Activated CD4-positive, alpha-beta memory T cell treated with anti-CD3 and anti-CD28 coated beads for 36 hours (primary cell): ENCODE measurements at regions of chr1 and their contacts with region 1.

Region 1: DNA sequence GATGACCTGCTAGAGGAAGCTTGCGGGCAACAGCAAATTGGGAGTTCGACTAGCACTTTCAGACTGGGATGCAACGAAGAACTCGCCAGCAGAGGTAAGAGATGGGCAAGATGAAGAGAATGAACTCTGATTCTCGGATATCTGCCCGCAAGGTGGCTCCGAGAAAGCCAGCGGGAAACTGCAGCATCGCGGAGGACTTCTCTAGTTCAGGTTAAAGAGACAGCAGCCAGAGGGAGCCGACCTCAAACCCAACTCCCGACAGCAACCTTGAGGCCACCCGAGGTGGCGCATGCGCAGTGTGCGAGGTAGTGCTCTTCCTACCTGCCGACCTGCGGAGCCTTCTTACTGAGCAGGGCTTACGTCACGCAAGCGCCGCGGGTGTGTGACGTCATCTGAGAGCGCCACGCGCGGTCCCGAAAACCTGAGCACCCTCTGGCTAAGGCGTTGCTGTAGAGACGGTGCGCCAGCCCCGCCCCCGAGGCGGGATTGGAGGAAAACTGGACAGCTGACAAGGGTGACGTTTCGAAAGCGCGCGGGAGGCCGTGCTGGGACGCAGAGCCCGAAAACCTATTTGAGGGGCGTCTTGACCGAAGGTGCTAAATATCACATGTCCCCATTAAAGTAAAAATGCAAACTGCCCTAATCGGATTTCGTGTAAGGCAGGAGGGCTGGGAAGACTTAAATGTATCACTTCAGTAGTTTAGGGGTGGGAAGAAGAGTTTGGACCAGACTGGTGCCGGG is 110.5 kb upstream of the SLC25A33 start:
- DNase-seq: peak; percentile 100
- H3K4me3 Mint-ChIP-seq: peak overlapping the region; percentile 90
- H3K27ac Mint-ChIP-seq: peak overlapping the region; percentile 93
- H3K4me1 Mint-ChIP-seq: peaks cover 44% of the 10 kb centered on the region
- H3K27me3 Mint-ChIP-seq: no peaks in the 10 kb centered on the region

Region 2: GRCh38 chr1:9275567-9276034 is 153.2 kb before region 1 on chr1:
- CTCF ChIA-PET with region 1: interaction called, 3 read pairs
- POLR2A ChIA-PET with region 1: interaction called, 4 read pairs
- intact Hi-C with region 1: loop called (anchors 5 kb)
- DNase-seq: peak; percentile 94
- H3K4me3 Mint-ChIP-seq: no peak overlapping the region
- H3K27ac Mint-ChIP-seq: no peak overlapping the region
- H3K4me1 Mint-ChIP-seq: peaks cover 35% of the 10 kb centered on the region
- H3K27me3 Mint-ChIP-seq: peaks cover 6% of the 10 kb centered on the region

Region 3: DNA sequence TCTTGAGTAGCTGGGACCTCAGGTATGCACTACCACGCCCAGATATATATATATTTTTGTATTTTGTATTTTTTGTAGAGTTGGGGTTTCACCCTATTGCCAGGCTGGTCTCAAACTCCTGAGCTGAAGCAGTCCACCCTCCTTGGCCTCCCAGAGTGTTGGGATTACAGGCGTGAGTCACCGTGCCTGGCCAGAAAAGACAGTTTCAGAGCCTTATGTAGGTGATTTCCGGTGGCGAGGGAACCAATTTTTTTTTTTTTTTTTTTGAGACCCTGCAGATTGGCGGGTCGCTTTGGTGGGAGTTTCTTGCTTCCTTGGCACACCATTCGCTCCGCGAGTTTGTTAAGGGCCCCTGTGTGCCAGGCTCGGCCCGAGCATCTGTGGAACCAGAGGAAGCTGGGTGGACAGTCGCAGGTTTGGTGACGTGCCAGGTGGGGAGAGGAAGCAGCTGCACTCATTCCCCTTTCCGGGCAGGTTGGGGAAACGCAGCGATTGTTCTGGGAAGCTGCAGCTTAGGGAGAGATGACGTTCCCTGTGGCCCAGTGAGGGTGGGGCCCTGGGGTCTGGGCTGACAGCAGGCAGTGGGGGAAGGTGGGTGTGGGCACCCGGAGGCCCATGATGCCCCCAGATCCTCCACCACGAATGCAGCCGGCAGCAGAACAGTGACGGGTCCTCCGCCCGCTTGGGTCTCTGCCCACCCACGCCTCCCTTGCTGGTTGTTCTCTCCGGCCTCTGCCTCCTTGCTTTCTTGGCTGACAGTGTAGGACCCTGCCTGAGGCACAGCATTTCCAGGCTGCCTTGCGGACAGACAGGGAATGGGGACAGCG is 111.0 kb before region 1 on chr1:
- CTCF ChIA-PET with region 1: no interaction called
- POLR2A ChIA-PET with region 1: no interaction called
- intact Hi-C with region 1: loop called (anchors 1 kb)
- DNase-seq: peak; percentile 44
- H3K4me3 Mint-ChIP-seq: no peak overlapping the region
- H3K27ac Mint-ChIP-seq: no peak overlapping the region
- H3K4me1 Mint-ChIP-seq: peaks cover 38% of the 10 kb centered on the region
- H3K27me3 Mint-ChIP-seq: no peaks in the 10 kb centered on the region

Region 4: GRCh38 chr1:9413148-9413876 is 15.5 kb before region 1 on chr1:
- CTCF ChIA-PET with region 1: interaction called, 7 read pairs
- POLR2A ChIA-PET with region 1: interaction called, 16 read pairs
- intact Hi-C with region 1: loop called (anchors 1 kb)
- DNase-seq: peak; percentile 90
- H3K4me3 Mint-ChIP-seq: no peak overlapping the region
- H3K27ac Mint-ChIP-seq: peak overlapping the region; percentile 56
- H3K4me1 Mint-ChIP-seq: peaks cover 51% of the 10 kb centered on the region
- H3K27me3 Mint-ChIP-seq: peaks cover 5% of the 10 kb centered on the region

Region 5: DNA sequence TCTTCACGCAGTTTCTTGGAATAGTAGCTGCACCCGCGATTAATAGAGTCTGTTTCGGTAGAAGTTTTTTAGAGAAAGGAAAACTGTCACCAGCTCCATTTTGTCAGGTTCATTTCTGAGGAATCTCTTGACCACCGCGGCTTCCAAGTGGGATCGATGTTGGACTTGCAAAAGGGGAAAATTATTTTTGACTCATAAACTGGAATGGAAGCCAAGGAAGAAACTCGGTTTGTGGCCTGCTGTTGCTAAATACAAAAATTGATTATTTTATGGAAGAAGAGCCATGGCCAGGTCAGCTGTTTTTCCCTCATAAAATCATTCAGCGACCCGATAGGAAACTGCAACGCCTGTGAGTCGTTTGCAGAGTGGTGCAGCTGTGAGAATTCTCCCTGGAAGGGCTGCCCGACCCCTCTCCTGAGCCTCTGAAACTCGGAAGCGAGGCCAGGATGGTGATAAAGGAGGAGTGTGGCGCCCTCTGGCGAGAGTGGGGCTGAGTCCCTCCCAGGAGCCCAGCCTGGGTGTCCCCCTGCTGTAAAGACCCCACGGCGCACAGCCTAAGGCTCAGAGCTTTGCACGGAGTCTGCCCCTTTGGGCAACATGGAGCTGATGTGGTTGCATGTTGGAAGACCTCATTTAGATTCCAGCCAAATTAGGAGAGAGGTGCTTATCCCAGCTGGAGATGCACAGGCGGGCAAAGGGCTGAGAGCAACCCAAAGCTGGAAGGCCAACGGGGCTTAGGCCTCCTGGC is 26.9 kb after region 1 on chr1:
- CTCF ChIA-PET with region 1: interaction called, 18 read pairs
- POLR2A ChIA-PET with region 1: no interaction called
- intact Hi-C with region 1: no loop called
- DNase-seq: peak; percentile 74
- H3K4me3 Mint-ChIP-seq: no peak overlapping the region
- H3K27ac Mint-ChIP-seq: no peak overlapping the region
- H3K4me1 Mint-ChIP-seq: no peaks in the 10 kb centered on the region
- H3K27me3 Mint-ChIP-seq: no peaks in the 10 kb centered on the region

Region 6: GRCh38 chr1:9539165-9539828 is 110.5 kb after region 1 on chr1 and contains the start of gene SLC25A33:
- CTCF ChIA-PET with region 1: no interaction called
- POLR2A ChIA-PET with region 1: no interaction called
- intact Hi-C with region 1: loop called (anchors 2 kb)
- DNase-seq: peak; percentile 99
- H3K4me3 Mint-ChIP-seq: peak within 1 kb of the TSS; percentile 91
- H3K27ac Mint-ChIP-seq: peak within 1 kb of the TSS; percentile 77
- H3K4me1 Mint-ChIP-seq: peaks cover 33% of the 10 kb centered on the region
- H3K27me3 Mint-ChIP-seq: no peaks in the 10 kb centered on the region
- total RNA-seq, gene SLC25A33: 5.4 to 6.1 TPM